Activated CD4-positive, alpha-beta T cell treated with anti-CD3 and anti-CD28 coated beads for 36 hours (primary cell): ENCODE measurements at regions of chr13 and their contacts with region 1.

Region 1: DNA sequence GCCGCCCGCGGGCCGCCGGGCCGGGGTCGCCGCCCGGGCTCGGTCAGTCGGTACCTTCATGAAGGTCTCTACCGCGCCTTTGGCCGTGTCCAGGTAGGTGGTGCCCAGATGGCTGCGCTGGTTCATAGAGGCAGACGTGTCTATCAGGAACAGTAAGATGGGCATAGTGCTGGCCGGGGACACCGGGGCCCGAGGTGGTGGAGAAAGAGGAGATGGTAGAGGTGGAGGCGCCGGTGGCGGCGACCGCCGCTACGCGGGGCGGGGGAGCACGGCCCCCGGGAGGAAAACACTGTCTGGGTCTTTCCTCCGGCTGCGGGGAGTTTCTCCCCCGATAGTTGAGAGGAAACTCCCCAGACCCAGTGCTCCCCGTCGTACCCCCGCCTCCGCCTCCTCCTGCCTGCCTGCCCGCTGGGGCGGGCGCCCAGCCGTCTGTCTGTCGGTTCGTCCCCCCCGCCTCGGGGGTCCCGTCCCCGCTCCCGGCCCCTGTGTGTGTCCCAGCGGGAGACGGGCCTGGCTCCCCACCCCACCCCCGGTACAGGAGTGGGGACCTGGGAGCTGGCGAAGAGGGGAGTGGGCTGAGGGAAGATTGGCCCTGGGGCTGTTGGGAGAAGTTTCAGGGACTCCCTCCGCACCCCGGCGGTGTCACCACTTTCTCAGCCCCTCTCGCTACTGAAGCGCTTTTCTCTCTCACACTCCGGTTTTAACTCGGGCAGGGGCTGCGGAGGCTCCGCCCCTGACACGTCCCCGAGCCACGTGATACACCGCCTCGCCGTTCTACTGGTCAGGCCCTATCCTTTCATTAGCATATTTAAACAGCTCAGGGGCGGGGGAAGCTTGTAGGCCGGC is at the start of gene INTS6:
- DNase-seq: peak; percentile 99
- ATAC-seq: peak; percentile 87
- H3K4me3 Mint-ChIP-seq: peak within 1 kb of the TSS; percentile 84
- H3K27ac Mint-ChIP-seq: peak within 1 kb of the TSS; percentile 97
- H3K4me1 Mint-ChIP-seq: peaks cover 33% of the 10 kb centered on the region
- H3K27me3 Mint-ChIP-seq: no peaks in the 10 kb centered on the region
- total RNA-seq, gene INTS6: 47.9 to 50.3 TPM

Region 2: DNA sequence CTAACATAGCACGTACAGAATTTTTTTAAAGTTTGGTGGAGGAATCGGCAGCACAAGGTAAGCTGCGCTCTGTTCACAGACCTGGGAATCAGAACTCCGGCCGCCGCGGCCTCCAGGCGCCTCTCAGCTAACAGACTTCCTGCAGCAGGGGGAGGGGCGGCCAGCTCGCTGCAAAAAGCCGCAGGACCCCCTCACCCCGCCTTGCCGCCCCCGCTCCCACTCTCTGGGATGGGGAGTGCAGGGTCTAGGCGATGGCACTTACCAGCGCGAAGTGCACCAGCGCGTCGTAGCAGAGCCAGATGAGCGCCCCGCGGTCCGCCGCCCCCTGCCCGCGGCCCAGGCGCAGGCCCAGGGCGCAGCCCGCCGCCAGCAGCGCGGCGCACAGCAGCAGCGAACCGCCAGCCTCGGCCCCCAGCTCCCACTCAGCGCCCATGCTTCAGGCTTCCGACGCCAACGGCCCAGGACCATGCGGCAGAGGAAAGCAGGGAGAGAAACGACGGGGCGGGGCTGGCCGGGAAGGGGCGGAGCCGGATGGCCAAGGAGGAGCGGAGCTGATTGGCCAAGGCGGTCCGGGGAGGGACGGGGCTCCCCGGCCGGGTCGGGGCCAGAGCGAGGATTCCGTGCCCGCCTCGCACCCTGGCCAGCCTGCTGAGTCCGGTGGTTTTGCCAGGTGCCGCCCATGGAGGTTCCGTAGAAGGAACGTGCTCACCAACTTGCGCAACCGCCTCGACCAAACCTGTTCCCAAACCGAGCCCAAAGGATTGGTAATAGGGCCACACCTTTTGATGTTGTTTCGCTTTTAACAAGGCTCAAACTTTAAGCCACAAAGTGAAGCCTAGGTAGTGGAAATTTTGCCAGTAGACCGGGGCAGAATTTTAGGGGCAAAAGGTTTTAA is 1761.3 kb before region 1 on chr13 and contains the start of gene EBPL:
- CTCF ChIA-PET with region 1: no interaction called
- POLR2A ChIA-PET with region 1: no interaction called
- intact Hi-C with region 1: loop called in 1 of 2 experiments (anchors 5 kb)
- DNase-seq: peak; percentile 95
- ATAC-seq: peak; percentile 98
- H3K4me3 Mint-ChIP-seq: peak within 1 kb of the TSS; percentile 87
- H3K27ac Mint-ChIP-seq: peak within 1 kb of the TSS; percentile 84
- H3K4me1 Mint-ChIP-seq: peaks cover 30% of the 10 kb centered on the region
- H3K27me3 Mint-ChIP-seq: no peaks in the 10 kb centered on the region
- total RNA-seq, gene EBPL: 40.7 to 55.8 TPM

Region 3: GRCh38 chr13:50081679-50082425 is 1370.7 kb before region 1 on chr13:
- CTCF ChIA-PET with region 1: no interaction called
- POLR2A ChIA-PET with region 1: no interaction called
- intact Hi-C with region 1: loop called in 1 of 2 experiments (anchors 5 kb)
- DNase-seq: peak; percentile 99
- ATAC-seq: peak; percentile 76
- H3K4me3 Mint-ChIP-seq: peak overlapping the region; percentile 94
- H3K27ac Mint-ChIP-seq: peak overlapping the region; percentile 98
- H3K4me1 Mint-ChIP-seq: peaks cover 37% of the 10 kb centered on the region
- H3K27me3 Mint-ChIP-seq: peaks cover 8% of the 10 kb centered on the region

Region 4: GRCh38 chr13:51502153-51502651 is 49.6 kb after region 1 on chr13:
- CTCF ChIA-PET with region 1: no interaction called
- POLR2A ChIA-PET with region 1: no interaction called
- intact Hi-C with region 1: loop called (anchors 1 kb)
- DNase-seq: peak; percentile 68
- ATAC-seq: peak; percentile 92
- H3K4me3 Mint-ChIP-seq: no peak overlapping the region
- H3K27ac Mint-ChIP-seq: peak overlapping the region; percentile 73
- H3K4me1 Mint-ChIP-seq: peaks cover 29% of the 10 kb centered on the region
- H3K27me3 Mint-ChIP-seq: peaks cover 2% of the 10 kb centered on the region

Region 5: GRCh38 chr13:51645154-51645650 is 192.6 kb after region 1 on chr13:
- CTCF ChIA-PET with region 1: no interaction called
- POLR2A ChIA-PET with region 1: interaction called, 4 read pairs
- intact Hi-C with region 1: loop called in 1 of 2 experiments (anchors 2 kb)
- DNase-seq: peak; percentile 24
- ATAC-seq: peak; percentile 48
- H3K4me3 Mint-ChIP-seq: peak overlapping the region; percentile 29
- H3K27ac Mint-ChIP-seq: peak overlapping the region; percentile 90
- H3K4me1 Mint-ChIP-seq: peaks cover 43% of the 10 kb centered on the region
- H3K27me3 Mint-ChIP-seq: no peaks in the 10 kb centered on the region

Region 6: GRCh38 chr13:51797664-51798488 is 345.3 kb after region 1 on chr13:
- CTCF ChIA-PET with region 1: interaction called, 15 read pairs
- POLR2A ChIA-PET with region 1: interaction called, 30 read pairs
- intact Hi-C with region 1: loop called (anchors 1 kb)
- DNase-seq: peak; percentile 79
- ATAC-seq: peak; percentile 51
- H3K4me3 Mint-ChIP-seq: no peak overlapping the region
- H3K27ac Mint-ChIP-seq: no peak overlapping the region
- H3K4me1 Mint-ChIP-seq: peaks cover 41% of the 10 kb centered on the region
- H3K27me3 Mint-ChIP-seq: no peaks in the 10 kb centered on the region

Region 7: GRCh38 chr13:52128714-52129700 is 676.4 kb after region 1 on chr13 and contains the start of gene NEK5:
- CTCF ChIA-PET with region 1: interaction called, 3 read pairs
- POLR2A ChIA-PET with region 1: no interaction called
- intact Hi-C with region 1: loop called in 1 of 2 experiments (anchors 5 kb)
- DNase-seq: peak; percentile 76
- ATAC-seq: peak; percentile 82
- H3K4me3 Mint-ChIP-seq: peak within 1 kb of the TSS; percentile 77
- H3K27ac Mint-ChIP-seq: peak within 1 kb of the TSS; percentile 34
- H3K4me1 Mint-ChIP-seq: peaks cover 21% of the 10 kb centered on the region
- H3K27me3 Mint-ChIP-seq: peaks cover 6% of the 10 kb centered on the region
- total RNA-seq, gene NEK5: 0.16 to 0.44 TPM